ENCODE measurements at regions of chr5 and their contacts with region 1.

Region 1: DNA sequence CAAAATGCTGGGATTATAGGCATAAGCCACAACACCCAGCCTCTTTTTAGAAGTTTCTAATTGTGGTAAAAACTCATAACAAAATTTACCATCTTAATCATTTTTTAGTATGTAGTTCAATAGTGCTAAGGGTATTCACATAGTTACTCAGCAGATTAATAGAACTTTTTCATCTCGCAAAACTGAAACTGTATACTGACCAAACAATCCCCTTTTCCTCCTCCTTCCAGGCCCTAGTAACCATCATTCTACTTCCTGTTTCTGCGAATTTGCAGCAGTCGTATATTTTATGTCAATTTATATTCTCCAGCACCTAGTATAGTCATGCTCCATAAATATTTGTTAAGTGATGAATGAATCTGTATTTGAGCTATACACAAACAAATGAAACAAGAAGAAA is 86.3 kb upstream of the ERBIN start:
- DNase-seq: no peak
- H3K4me3 ChIP-seq: no peak overlapping the region
- H3K27me3 ChIP-seq: no peaks in the 10 kb centered on the region
- CTCF ChIP-seq: no peak

Region 2: DNA sequence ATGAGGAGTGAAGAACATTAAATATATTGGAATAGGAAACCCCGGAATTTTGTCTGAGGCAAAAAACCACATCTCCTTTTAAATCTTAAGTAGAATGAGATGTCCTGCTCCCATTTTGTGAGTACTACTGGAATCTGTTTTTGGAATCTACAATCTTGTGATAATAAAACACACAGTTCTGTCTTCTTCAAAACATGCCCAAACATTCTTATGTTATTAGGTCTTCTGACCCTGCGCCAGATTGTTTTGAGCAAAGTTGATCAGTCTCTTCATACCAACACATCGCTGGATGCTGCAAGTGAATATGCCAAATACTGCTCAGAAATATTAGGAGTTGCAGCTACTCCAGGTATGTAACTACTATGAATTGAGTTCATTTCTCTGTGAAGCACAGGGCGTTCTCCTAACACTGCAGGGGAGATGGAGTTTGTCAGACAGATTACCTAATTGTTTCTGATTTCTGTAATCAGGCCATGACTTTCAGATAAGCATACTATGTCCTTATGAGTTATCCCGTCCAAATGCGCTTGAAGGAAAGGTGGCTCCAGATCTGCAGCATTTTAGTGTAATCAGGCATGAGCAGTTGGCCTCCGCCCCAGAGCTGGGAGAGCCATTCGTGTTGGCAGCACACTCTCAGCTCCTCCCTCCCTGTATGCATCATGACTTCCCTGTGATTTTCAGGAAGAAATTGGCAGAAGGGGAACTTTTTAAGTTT is 30.1 kb before region 1 on chr5:
- CTCF ChIA-PET with region 1: no interaction called
- POLR2A ChIA-PET with region 1: no interaction called
- DNase-seq: peak; percentile 60
- H3K4me3 ChIP-seq: no peak overlapping the region
- H3K27me3 ChIP-seq: no peaks in the 10 kb centered on the region
- CTCF ChIP-seq: no peak

Region 3: GRCh38 chr5:65861830-65862241 is 21.8 kb after region 1 on chr5:
- CTCF ChIA-PET with region 1: interaction called, 3 read pairs
- POLR2A ChIA-PET with region 1: interaction called, 15 read pairs
- DNase-seq: peak; percentile 99
- H3K4me3 ChIP-seq: no peak overlapping the region
- H3K27me3 ChIP-seq: no peaks in the 10 kb centered on the region
- CTCF ChIP-seq: no peak